Panc1 (cell line): ENCODE measurements at regions of chr12 and their contacts with region 1.

Region 1: GRCh38 chr12:56724972-56725722 is at the start of gene NACA:
- DNase-seq: peak; percentile 91
- ATAC-seq: peak; percentile 96
- H3K4me3 ChIP-seq: peak within 1 kb of the TSS; percentile 93 to 100
- H3K27ac ChIP-seq: peak within 1 kb of the TSS; percentile 100
- H3K4me1 ChIP-seq: peaks cover 35% of the 10 kb centered on the region
- H3K27me3 ChIP-seq: no peaks in the 10 kb centered on the region
- CTCF ChIP-seq: no peak
- total RNA-seq, gene NACA: 716 TPM

Region 2: DNA sequence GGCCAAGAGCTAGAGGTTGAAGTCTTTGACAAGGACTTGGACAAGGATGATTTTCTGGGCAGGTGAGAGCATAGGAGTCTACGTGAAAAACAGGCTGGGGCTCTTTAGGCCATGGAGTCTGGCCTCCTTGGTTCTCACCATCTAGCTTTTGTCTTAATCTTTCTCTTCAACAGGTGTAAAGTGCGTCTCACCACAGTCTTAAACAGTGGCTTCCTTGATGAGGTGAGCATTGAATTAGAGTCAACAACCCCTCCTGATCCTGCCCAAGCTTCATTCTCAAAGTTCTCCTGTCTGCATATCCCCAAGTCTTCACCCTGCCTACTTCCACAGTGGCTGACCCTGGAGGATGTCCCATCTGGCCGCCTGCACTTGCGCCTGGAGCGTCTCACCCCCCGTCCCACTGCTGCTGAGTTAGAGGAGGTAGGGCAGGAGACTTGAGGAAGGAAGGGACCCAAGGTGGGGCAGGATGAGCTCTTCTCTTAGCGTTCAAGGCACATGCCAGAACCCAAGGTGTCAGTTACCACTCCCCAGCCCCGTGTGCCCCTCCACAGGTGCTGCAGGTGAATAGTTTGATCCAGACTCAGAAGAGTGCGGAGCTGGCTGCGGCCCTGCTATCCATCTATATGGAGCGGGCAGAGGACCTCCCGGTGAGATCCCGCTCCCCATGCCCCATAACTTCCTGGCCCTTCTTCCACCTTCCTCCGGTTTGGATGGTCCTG is 587.1 kb before region 1 on chr12:
- CTCF ChIA-PET with region 1: no interaction called
- POLR2A ChIA-PET with region 1: interaction called, 20 read pairs
- in situ Hi-C with region 1: no loop called
- intact Hi-C with region 1: no loop called
- DNase-seq: no peak
- ATAC-seq: no peak
- H3K4me3 ChIP-seq: no peak overlapping the region
- H3K27ac ChIP-seq: no peak overlapping the region
- H3K4me1 ChIP-seq: no peaks in the 10 kb centered on the region
- H3K27me3 ChIP-seq: no peaks in the 10 kb centered on the region
- CTCF ChIP-seq: no peak

Region 3: GRCh38 chr12:56677680-56678079 is 47.5 kb before region 1 on chr12:
- CTCF ChIA-PET with region 1: no interaction called
- POLR2A ChIA-PET with region 1: interaction called, 12 read pairs
- in situ Hi-C with region 1: no loop called
- intact Hi-C with region 1: no loop called
- DNase-seq: no peak
- ATAC-seq: no peak
- H3K4me3 ChIP-seq: no peak overlapping the region
- H3K27ac ChIP-seq: no peak overlapping the region
- H3K4me1 ChIP-seq: peaks cover 9% of the 10 kb centered on the region; the same call in 1 of the 2 replicates
- H3K27me3 ChIP-seq: no peaks in the 10 kb centered on the region
- CTCF ChIP-seq: no peak

Region 4: DNA sequence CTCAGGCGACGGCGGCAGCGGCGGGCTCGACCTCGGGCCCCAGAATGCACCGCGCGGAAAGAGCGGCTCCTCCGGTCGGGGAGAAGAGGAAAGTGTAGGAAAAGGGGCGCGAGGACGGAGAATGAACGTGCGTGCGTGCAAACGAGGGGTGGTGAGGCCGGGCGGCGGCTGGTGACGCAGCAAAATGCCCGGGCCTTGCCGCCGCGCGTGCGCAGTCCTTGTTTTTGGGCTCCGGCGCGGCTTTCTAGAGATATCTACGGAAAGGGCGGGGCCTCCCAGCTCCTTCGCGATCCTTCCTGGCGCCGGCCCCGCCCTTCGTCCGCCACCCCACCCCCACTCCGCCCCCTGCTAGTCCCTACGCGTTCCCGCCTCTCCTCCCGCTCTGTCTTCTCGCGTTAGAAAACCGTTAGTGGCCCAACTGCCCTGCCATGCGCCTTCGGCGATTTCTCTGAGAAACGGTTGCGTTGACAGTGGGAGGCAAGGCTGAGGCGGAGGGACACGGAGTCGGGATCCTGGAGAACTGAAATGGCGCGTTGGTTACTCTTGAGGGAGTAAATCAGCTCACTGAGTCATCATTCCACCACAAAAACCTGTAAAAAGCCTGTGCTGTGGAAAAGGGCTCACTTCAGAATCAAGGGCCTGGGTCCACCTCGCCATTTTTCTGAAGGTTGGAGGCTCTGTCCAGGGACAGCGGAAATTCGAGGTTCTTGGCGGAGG is 36.9 kb before region 1 on chr12 and contains the start of gene PTGES3:
- CTCF ChIA-PET with region 1: no interaction called
- POLR2A ChIA-PET with region 1: interaction called, 9 read pairs
- in situ Hi-C with region 1: no loop called
- intact Hi-C with region 1: loop called (anchors 2 kb)
- DNase-seq: peak; percentile 92
- ATAC-seq: peak; percentile 88
- H3K4me3 ChIP-seq: peak within 1 kb of the TSS; percentile 97 to 99
- H3K27ac ChIP-seq: peak within 1 kb of the TSS; percentile 100
- H3K4me1 ChIP-seq: no peaks in the 10 kb centered on the region
- H3K27me3 ChIP-seq: no peaks in the 10 kb centered on the region
- CTCF ChIP-seq: no peak
- total RNA-seq, gene PTGES3: 339 TPM

Region 5: GRCh38 chr12:56699020-56699661 is 26.0 kb before region 1 on chr12:
- CTCF ChIA-PET with region 1: no interaction called
- POLR2A ChIA-PET with region 1: interaction called, 12 read pairs
- in situ Hi-C with region 1: no loop called
- intact Hi-C with region 1: no loop called
- DNase-seq: no peak
- ATAC-seq: no peak
- H3K4me3 ChIP-seq: no peak overlapping the region
- H3K27ac ChIP-seq: no peak overlapping the region
- H3K4me1 ChIP-seq: no peaks in the 10 kb centered on the region
- H3K27me3 ChIP-seq: no peaks in the 10 kb centered on the region
- CTCF ChIP-seq: no peak